Activated CD4-positive, alpha-beta memory T cell treated with anti-CD3 and anti-CD28 coated beads, Interleukin-2, amount 10 ng/mL, durations not matched to agents 7 days and 5 days (primary cell): ENCODE measurements at regions of chr11 and their contacts with region 1.

Region 1: DNA sequence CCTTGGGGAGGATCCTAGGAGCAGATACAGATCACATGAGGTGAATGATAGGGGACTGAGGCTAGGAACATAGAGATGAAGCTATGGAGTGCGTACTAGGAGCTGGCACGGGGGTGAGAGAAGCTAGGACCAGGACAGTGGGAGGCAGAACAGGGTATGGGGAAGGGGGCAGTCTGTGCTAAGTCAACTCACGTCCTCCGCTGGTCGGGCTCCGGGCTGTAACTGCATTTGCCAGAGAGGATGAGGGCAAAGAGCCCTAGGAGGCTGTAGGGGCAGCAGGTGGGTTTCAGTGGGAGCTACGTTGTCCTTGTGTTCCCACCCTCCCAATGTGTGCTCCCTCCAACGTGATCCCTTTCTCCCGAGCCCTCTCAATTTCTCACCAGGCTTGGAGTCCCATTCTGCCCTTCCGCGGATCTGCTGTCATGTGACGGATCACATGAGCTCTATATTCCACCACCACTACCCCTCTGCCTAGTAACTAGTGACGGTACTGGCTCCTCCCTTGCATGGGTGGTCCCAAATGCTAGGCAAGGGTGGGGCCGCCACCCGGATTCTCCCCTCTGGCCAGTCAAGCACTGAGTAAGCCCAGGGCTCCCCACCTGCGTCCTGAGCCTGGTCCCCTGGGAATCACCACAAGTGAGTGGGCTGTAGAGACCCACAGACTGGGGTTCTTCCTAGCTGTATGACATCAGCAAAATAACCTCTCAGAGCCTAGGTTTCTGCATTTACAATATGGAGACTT is at the start of gene TPP1:
- DNase-seq: peak; percentile 92
- H3K4me3 Mint-ChIP-seq: no peak within 1 kb of the TSS
- H3K27ac Mint-ChIP-seq: no peak within 1 kb of the TSS
- H3K4me1 Mint-ChIP-seq: peaks cover 6% of the 10 kb centered on the region
- H3K27me3 Mint-ChIP-seq: no peaks in the 10 kb centered on the region
- total RNA-seq, gene TPP1: 130 to 131 TPM

Region 2: GRCh38 chr11:6603287-6604080 is 15.7 kb before region 1 on chr11 and contains the starts of genes ILK and RRP8:
- CTCF ChIA-PET with region 1: interaction called, 46 read pairs
- POLR2A ChIA-PET with region 1: interaction called, 108 read pairs
- DNase-seq: peak; percentile 91
- H3K4me3 Mint-ChIP-seq: no peak within 1 kb of the TSS
- H3K27ac Mint-ChIP-seq: no peak within 1 kb of the TSS
- H3K4me1 Mint-ChIP-seq: peaks cover 13% of the 10 kb centered on the region
- H3K27me3 Mint-ChIP-seq: no peaks in the 10 kb centered on the region
- total RNA-seq, gene ILK: 135 to 138 TPM
- total RNA-seq, gene RRP8: 21.8 to 24.4 TPM

Region 3: DNA sequence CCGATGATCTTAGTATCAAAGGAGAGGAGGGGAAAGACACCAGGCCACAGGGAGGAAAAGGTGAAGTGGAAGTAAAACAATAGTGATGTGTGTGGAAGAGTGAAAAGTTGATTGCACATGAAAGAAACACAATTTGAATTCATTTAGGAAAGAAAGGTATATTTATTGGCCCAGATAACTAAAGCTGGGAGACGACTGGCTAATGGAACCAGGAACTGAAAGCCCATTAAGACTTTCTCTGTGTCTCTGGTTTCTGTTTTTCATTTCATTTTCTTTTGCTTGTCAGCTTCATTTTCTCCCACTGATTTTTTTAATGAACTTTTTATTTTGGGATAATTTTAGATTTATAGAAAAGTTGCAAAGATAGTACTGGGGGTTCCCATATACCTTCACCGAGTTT is 41.5 kb after region 1 on chr11:
- CTCF ChIA-PET with region 1: interaction called, 36 read pairs
- POLR2A ChIA-PET with region 1: interaction called, 15 read pairs
- DNase-seq: no peak
- H3K4me3 Mint-ChIP-seq: no peak overlapping the region
- H3K27ac Mint-ChIP-seq: no peak overlapping the region
- H3K4me1 Mint-ChIP-seq: peaks cover 7% of the 10 kb centered on the region
- H3K27me3 Mint-ChIP-seq: peaks cover 24% of the 10 kb centered on the region

Region 4: GRCh38 chr11:6674862-6675261 is 55.7 kb after region 1 on chr11:
- CTCF ChIA-PET with region 1: interaction called, 6 read pairs
- POLR2A ChIA-PET with region 1: interaction called, 13 read pairs
- DNase-seq: no peak
- H3K4me3 Mint-ChIP-seq: no peak overlapping the region
- H3K27ac Mint-ChIP-seq: no peak overlapping the region
- H3K4me1 Mint-ChIP-seq: peaks cover 56% of the 10 kb centered on the region
- H3K27me3 Mint-ChIP-seq: no peaks in the 10 kb centered on the region